ENCODE measurements at regions of chr22 and their contacts with region 1.

Region 1: GRCh38 chr22:38996105-38996504 is 14.0 kb downstream of the APOBEC3B start:
- DNase-seq: no peak
- ATAC-seq: no peak
- H3K4me3 ChIP-seq: no peak overlapping the region
- H3K27ac ChIP-seq: no peak overlapping the region
- H3K4me1 ChIP-seq: no peaks in the 10 kb centered on the region
- H3K27me3 ChIP-seq: peaks cover 9 to 30% (median 13%) of the 10 kb centered on the region in 3 donors
- CTCF ChIP-seq: no peak
- POLR2A ChIP-seq: no peak

Region 2: GRCh38 chr22:38957046-38957759 is 38.9 kb before region 1 on chr22 and contains the start of gene APOBEC3A:
- in situ Hi-C with region 1: loop called in 1 of 4 experiments (anchors 5 kb)
- intact Hi-C with region 1: no loop called
- DNase-seq: no peak
- ATAC-seq: no peak
- H3K4me3 ChIP-seq: no peak within 1 kb of the TSS
- H3K27ac ChIP-seq: no peak within 1 kb of the TSS
- H3K4me1 ChIP-seq: no peaks in the 10 kb centered on the region
- H3K27me3 ChIP-seq: peaks cover 0 to 4% (median 0%) of the 10 kb centered on the region in 3 donors
- CTCF ChIP-seq: no peak
- POLR2A ChIP-seq: no peak
- total RNA-seq, gene APOBEC3A: 0.75 to 0.76 TPM in 2 of 4 donors, not detected in the others